Left cardiac atrium (tissue), 4 donors: ENCODE measurements at regions of chr22 and their contacts with region 1.

Region 1: GRCh38 chr22:41091132-41092022 is 1.0 kb upstream of the EP300 start:
- DNase-seq: peak; percentile 100
- ATAC-seq: peak; percentile 96 to 98

Region 2: DNA sequence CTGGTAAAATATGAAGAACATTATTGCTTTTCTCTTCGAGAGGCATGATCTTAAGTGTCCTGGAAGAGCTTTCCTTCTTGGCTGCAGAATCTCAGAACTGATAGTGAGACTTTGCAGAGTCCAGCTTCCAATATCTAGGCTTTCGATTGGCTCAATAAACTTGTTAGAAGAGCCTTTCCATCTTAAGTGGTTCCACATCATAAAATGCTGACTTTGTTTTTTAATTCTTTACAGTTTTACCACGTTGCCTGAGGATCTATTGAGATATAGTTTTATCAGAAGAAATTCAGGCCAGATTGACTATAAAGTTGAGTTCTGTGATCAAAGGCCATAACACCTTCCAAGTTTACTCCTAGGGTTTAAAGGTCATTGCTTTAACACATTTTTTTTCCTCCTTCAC is 213.9 kb before region 1 on chr22:
- intact Hi-C with region 1: no loop called
- DNase-seq: no peak
- ATAC-seq: no peak

Region 3: DNA sequence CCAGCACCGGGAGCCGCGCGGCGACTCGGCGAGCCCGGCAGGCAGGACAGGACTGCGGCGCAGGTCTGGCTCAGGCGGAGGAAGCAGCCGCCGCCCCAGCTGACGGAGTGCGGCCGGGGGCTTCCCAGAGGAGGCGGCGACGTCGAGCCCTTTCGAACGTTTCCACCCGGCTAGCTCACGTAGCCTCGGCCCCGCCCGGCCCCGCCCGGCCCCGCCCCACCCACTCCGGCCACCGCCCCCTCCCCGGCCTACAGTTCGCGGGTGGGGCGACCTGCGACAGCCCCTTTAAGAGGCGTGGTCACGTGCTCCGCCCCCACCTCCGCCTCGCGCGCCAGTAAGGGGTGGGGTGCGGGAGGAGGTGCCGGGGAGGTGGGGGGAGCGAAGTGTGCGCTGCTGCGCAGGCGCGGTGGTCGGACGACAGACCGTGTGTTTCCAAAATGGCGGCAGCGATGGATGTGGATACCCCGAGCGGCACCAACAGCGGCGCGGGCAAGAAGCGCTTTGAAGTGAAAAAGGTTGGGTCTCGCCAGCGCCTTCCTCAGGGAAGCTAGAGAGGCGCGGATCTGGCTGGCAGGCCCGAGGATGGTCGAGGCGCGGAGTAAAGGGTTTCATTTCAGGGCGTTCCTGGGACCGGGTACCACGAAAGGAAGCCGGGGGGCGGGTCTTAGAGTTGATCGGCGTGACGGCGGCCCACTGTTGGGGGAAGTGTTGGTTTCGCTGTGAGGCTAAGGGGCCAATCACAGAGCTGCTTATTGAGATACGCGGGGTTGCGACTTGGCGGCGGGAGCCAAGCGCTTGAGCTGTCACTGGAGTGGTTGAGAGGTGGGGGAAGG is 140.2 kb before region 1 on chr22 and contains the start of gene RBX1:
- intact Hi-C with region 1: loop called (anchors 1 to 5 kb)
- DNase-seq: peak; percentile 98
- ATAC-seq: peak; percentile 96 to 97
- total RNA-seq, gene RBX1: 59.3 to 61.4 TPM

Region 4: DNA sequence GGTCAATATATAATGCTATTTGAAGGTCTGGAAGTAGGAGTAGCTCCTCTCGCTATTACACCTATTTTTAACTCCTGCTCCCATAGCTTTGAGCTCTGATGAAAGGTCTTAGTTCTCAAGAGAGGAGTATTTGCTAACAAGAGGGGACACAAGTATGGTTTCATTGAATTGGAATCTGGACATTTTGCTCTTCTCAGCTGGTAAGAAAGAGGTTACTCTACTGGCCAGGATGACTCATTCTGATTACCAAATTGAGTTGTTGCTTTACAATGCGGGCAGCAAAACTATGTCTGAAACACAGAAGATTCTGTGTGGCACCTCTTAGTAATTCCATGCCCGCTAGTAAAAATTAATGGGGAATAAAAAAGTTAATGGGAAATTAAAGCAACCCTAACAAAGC is 62.5 kb before region 1 on chr22:
- intact Hi-C with region 1: loop called in 1 of 2 experiments (anchors 5 kb)
- DNase-seq: no peak
- ATAC-seq: peak in 1 of 2 donors; percentile 75